WTC11 (cell line): ENCODE measurements at regions of chr6 and their contacts with region 1.

Region 1: GRCh38 chr6:129370268-129370916 is 339.6 kb downstream of the ARHGAP18 start:
- DNase-seq: peak; percentile 24
- ATAC-seq: peak; percentile 64
- H3K4me3 Mint-ChIP-seq: no peak overlapping the region
- H3K27ac Mint-ChIP-seq: no peak overlapping the region
- H3K4me1 Mint-ChIP-seq: peaks cover 14% of the 10 kb centered on the region
- H3K27me3 Mint-ChIP-seq: no peaks in the 10 kb centered on the region
- CTCF ChIP-seq: peak; percentile 52; the same call in 1 of the 2 replicates

Region 2: DNA sequence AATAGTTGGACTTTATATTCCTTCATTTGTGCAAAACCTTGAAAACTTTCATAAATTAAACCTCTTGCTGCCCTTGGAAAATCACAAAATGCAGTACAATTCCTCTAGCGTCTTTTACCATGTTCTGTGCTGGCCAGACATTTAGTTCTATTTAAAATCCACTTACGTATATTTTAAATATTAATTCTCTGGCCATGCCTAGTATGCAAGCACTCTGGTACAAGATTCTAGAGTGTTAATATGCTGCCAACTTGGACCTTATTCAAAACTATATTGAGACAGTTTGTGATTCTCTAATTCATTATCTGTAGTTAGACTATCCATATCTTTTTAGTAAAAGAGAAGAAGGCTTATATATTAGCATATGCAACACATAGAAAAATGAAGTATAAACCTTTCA is 11.5 kb after region 1 on chr6:
- CTCF ChIA-PET with region 1: interaction called, 10 read pairs
- POLR2A ChIA-PET with region 1: no interaction called
- DNase-seq: no peak
- ATAC-seq: no peak
- H3K4me3 Mint-ChIP-seq: no peak overlapping the region
- H3K27ac Mint-ChIP-seq: no peak overlapping the region
- H3K4me1 Mint-ChIP-seq: 0 out of 2 replicates have a peak, but pooled peaks cover 3% of the 10 kb centered on the region
- H3K27me3 Mint-ChIP-seq: no peaks in the 10 kb centered on the region
- CTCF ChIP-seq: no peak